ENCODE measurements at regions of chr17 and their contacts with region 1.

Region 1: DNA sequence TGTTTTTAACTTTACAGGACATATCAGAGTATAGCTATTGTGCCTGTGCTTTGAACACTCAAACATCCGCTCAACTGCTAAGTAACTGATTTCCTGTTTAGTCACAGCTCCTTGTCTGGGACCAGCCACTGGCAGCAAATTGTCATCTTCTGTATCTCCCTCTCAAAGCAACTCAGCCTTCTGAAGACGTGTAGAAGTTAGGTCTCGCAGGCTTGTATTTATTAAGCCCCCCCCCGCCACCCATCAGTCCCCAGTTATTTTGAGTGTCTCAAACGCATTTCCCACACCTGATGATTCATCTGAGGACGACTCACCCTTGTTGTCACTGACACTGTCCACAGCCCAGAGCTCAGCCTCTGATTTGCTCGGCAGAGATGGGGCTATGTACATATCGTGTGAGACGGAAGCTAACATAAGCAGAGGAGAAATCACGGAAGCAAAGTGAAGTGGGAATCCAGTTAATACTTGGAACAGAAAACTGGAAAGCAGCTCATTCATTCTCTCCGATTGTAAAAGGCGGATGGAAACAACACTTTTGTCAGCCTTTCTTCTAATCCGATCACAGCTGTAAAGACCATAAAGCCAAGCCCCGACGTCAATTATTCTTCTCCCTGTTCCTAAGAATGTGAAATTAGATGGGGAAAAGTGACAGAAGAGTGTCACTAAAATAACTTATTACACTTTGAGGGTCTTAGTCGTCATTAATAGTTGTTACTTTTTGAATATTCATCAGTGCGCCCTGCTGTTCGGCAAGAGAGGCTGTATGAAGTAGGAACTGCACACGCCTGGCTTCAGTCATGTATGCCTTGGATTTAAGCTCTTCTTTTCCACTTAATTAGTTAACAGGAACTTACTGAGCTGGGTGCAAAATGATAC is 64.2 kb downstream of the PITPNC1 start:
- DNase-seq: peak; percentile 8
- H3K27ac ChIP-seq: no peak overlapping the region
- CTCF ChIP-seq: no peak

Region 2: DNA sequence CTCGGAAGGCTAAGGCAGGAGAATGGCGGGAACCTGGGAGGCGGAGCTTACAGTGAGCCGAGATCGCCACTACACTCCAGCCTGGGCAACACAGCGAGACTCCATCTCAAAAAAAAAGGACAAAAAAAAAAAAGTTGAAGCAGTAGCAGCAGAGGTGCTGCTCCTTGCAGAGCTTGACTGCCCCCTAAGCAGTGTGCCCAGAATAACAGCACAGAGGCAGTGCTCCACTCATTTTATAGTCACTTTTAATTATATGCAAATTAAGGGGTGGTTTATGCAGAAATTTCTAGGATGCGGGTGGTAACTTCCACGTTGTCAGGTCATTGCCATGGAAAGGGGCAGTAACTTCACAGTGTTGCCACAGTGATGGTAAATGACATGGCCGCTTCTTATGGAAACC is 222.2 kb after region 1 on chr17:
- CTCF ChIA-PET with region 1: no interaction called
- POLR2A ChIA-PET with region 1: interaction called, 12 read pairs
- DNase-seq: no peak
- H3K27ac ChIP-seq: no peak overlapping the region
- CTCF ChIP-seq: no peak

Measured in RWPE1 (cell line).